ENCODE measurements at regions of chr2 and their contacts with region 1.

Region 1: DNA sequence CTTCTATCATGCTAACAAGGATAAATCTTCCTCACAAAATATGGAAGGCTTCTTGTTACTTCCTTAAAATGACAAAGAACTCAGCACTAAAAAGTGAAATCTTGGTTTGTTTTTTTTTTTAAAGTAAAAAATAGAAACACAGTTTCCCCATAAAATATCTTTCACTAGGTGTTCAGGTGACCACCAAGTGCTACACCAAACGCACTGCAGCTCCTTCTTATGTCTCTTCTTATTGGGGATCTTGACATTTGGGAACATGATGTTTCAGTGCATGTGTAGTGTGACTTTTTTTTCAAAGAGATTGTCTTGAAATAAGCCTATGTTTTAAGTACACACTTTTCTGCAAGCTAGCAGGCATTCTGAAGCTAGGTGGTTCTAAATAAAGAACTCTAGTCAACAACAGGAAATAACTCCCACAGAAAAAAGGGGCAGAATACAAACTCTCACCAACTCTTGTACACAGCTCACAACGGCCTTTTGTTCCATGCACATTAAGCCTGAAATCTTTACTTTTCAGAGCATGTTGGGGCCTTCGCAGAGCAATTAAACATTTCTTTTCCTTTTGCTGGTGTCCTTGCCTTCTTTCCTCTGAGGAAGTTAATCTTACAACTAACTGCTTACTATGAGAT is 13.2 kb upstream of the SERTAD2 start:
- DNase-seq: no peak
- H3K4me3 ChIP-seq: no peak overlapping the region
- H3K27ac ChIP-seq: no peak overlapping the region
- H3K4me1 ChIP-seq: peaks cover 3% of the 10 kb centered on the region
- H3K27me3 ChIP-seq: no peaks in the 10 kb centered on the region
- CTCF ChIP-seq: no peak

Region 2: GRCh38 chr2:64609227-64609941 is 57.5 kb before region 1 on chr2:
- CTCF ChIA-PET with region 1: no interaction called
- dilution Hi-C with region 1: loop called (anchors 5 kb)
- in situ Hi-C with region 1: no loop called
- intact Hi-C with region 1: no loop called
- DNase-seq: no peak
- H3K4me3 ChIP-seq: peak overlapping the region; percentile 16 to 52 (median 51)
- H3K27ac ChIP-seq: no peak overlapping the region
- H3K4me1 ChIP-seq: peaks cover 8% of the 10 kb centered on the region
- H3K27me3 ChIP-seq: no peaks in the 10 kb centered on the region
- CTCF ChIP-seq: peak in 1 of 2 donors; percentile 25

Region 3: DNA sequence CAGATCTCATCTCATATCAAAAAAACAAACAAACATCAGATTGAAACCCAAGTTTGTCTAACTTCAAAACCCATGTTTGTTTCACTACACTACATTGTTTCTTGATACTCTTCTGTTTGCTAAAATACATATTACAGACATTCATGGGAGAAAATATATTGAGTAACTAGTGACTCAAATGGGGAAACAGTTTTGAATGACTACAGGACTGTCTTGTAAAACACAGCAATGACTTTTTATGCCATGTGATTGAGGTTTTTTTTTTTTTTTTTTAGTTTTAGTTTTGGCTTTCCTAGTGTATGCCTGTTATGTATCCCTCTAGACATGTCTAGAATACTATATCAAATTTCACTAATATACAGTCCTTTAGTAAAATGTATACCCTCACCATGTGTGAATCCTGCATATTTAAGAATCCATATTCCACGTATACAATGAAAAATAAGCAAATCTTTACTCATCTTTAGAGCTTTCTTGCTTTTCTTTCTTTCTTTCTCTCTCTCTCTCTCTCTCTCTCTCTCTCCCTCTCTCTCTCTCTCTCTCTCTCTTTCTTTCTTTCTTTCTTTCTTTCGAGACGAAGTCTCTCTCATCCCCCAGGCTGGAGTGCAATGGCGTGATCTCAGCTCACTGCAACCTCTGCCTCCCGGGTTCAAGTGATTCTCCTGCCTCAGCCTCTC is 33.3 kb after region 1 on chr2:
- CTCF ChIA-PET with region 1: no interaction called
- dilution Hi-C with region 1: loop called (anchors 5 kb)
- in situ Hi-C with region 1: no loop called
- intact Hi-C with region 1: no loop called
- DNase-seq: peak; percentile 65
- H3K4me3 ChIP-seq: no peak overlapping the region
- H3K27ac ChIP-seq: no peak overlapping the region
- H3K4me1 ChIP-seq: peaks cover 6% of the 10 kb centered on the region
- H3K27me3 ChIP-seq: no peaks in the 10 kb centered on the region
- CTCF ChIP-seq: no peak

Region 4: GRCh38 chr2:64846179-64846578 is 179.3 kb after region 1 on chr2:
- CTCF ChIA-PET with region 1: no interaction called
- dilution Hi-C with region 1: loop called (anchors 5 kb)
- in situ Hi-C with region 1: no loop called
- intact Hi-C with region 1: no loop called
- DNase-seq: no peak
- H3K4me3 ChIP-seq: no peak overlapping the region
- H3K27ac ChIP-seq: no peak overlapping the region
- H3K4me1 ChIP-seq: peaks cover 33% of the 10 kb centered on the region
- H3K27me3 ChIP-seq: no peaks in the 10 kb centered on the region
- CTCF ChIP-seq: no peak